ENCODE measurements at regions of chr20 and their contacts with region 1.

Region 1: GRCh38 chr20:35303735-35304491 is 11.7 kb upstream of the FAM83C start:
- DNase-seq: peak; percentile 70 to 79 (median 78)
- ATAC-seq: peak in 3 of 4 donors; percentile 52 to 57 (median 54)
- H3K4me3 ChIP-seq: no peak overlapping the region
- H3K27ac ChIP-seq: no peak overlapping the region
- H3K4me1 ChIP-seq: peaks cover 0 to 36% (median 18%) of the 10 kb centered on the region in 12 donors
- H3K27me3 ChIP-seq: no peaks in the 10 kb centered on the region
- CTCF ChIP-seq: peak; percentile 82 to 94 (median 88)
- POLR2A ChIP-seq: no peak

Region 2: DNA sequence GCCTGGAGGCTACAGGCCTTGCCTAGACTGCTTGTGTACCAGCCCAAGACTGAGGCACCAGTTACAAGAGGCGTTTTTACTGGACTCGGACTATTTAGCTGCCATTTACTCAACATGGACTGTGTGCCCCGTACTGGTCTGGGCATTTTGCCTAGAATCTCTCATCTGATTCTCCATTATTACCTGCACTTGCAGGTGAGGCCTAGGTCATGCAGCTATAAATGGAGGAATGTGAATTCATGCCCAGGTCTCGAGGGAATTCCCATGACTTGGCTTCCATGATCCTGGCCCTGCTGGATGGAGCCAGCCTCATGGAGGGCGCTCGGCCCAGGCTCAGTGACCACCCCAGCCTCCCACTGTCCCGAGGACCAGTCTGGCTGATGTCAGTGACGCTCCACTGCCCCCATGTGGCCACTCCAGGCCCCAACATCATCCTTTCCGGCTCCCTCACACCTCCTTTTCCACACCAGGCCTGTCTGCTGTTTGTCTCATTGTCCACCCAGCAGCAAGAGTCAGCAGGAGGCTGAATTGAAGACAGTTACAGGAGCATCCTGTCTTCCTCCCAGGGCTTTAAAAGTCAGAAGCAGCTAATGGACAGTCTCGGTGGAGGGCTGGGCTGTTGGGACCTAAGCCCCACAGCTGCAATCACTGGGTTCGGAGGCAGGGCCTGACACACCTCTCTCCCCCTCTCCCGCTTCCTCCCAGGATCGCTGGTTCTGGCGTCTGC is 34.7 kb before region 1 on chr20:
- intact Hi-C with region 1: no loop called
- DNase-seq: peak in 4 of 5 donors; percentile 43 to 66 (median 58)
- ATAC-seq: peak; percentile 34 to 72 (median 70)
- H3K4me3 ChIP-seq: no peak overlapping the region
- H3K27ac ChIP-seq: no peak overlapping the region
- H3K4me1 ChIP-seq: peaks cover 0 to 14% (median 0%) of the 10 kb centered on the region in 12 donors
- H3K27me3 ChIP-seq: no peaks in the 10 kb centered on the region
- CTCF ChIP-seq: peak; percentile 54 to 82 (median 68)
- POLR2A ChIP-seq: no peak

Region 3: GRCh38 chr20:35327074-35327976 is 23.4 kb after region 1 on chr20:
- intact Hi-C with region 1: loop called in 1 of 10 experiments (anchors 2 kb)
- DNase-seq: no peak
- ATAC-seq: peak in 2 of 4 donors; percentile 71 to 73
- H3K4me3 ChIP-seq: no peak overlapping the region
- H3K27ac ChIP-seq: no peak overlapping the region
- H3K4me1 ChIP-seq: peaks cover 0 to 20% (median 8%) of the 10 kb centered on the region in 12 donors
- H3K27me3 ChIP-seq: no peaks in the 10 kb centered on the region
- CTCF ChIP-seq: no peak
- POLR2A ChIP-seq: no peak

Region 4: GRCh38 chr20:35344354-35344837 is 40.5 kb after region 1 on chr20:
- intact Hi-C with region 1: loop called in 1 of 10 experiments (anchors 5 kb)
- DNase-seq: peak in 4 of 5 donors; percentile 23 to 72 (median 63)
- ATAC-seq: peak in 3 of 4 donors; percentile 62 to 84 (median 74)
- H3K4me3 ChIP-seq: peak overlapping the region in 1 of 12 donors; percentile 16
- H3K27ac ChIP-seq: peak overlapping the region in 2 of 12 donors; percentile 20 to 43
- H3K4me1 ChIP-seq: peaks cover 0 to 14% (median 6%) of the 10 kb centered on the region in 12 donors
- H3K27me3 ChIP-seq: no peaks in the 10 kb centered on the region
- CTCF ChIP-seq: no peak
- POLR2A ChIP-seq: no peak

Region 5: GRCh38 chr20:35432430-35432735 is 128.5 kb after region 1 on chr20:
- intact Hi-C with region 1: loop called in 2 of 10 experiments (anchors 2 to 5 kb)
- DNase-seq: no peak
- ATAC-seq: no peak
- H3K4me3 ChIP-seq: no peak overlapping the region
- H3K27ac ChIP-seq: no peak overlapping the region
- H3K4me1 ChIP-seq: no peaks in the 10 kb centered on the region
- H3K27me3 ChIP-seq: no peaks in the 10 kb centered on the region
- CTCF ChIP-seq: no peak
- POLR2A ChIP-seq: no peak

Region 6: GRCh38 chr20:35437491-35437998 is 133.6 kb after region 1 on chr20:
- intact Hi-C with region 1: loop called in 8 of 10 experiments (anchors 2 to 5 kb)
- DNase-seq: no peak
- ATAC-seq: no peak
- H3K4me3 ChIP-seq: peak overlapping the region in 3 of 12 donors; percentile 10 to 40 (median 14)
- H3K27ac ChIP-seq: peak overlapping the region in 3 of 12 donors; percentile 4 to 67 (median 8)
- H3K4me1 ChIP-seq: peaks cover 0 to 8% (median 0%) of the 10 kb centered on the region in 12 donors
- H3K27me3 ChIP-seq: no peaks in the 10 kb centered on the region
- CTCF ChIP-seq: no peak
- POLR2A ChIP-seq: no peak

Region 7: DNA sequence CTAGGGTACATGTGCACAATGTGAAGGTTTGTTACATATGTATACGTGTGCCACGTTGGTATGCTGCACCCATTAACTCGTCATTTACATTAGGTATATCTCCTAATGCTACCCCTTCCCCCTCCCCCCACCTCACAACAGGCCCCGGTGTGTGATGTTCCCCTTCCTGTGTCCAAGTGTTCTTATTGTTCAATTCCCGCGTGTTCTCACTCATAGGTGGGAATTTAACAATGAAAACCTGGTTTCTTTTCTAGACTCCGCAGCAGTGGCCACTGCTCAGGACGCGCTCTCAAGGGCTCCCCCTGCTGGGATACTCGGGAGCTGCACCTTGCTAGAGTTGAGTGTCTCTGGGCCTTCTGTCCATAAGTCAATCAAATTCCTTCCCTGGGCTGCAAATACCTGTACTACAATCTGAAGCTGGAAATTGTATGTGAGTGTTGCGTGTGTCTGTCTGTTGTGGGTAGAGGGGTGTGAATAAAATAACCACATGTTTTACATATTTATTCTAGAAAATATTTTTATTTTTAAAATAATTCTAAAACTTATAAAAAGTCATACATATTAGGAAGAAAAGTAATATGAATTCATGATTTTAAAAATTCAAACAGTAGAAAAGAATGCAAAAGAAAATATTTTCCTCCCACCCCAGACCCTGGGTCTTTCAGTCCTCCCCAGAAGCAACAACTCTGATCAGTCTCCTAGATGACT is 143.3 kb after region 1 on chr20:
- intact Hi-C with region 1: loop called in 6 of 10 experiments (anchors 1 to 5 kb)
- DNase-seq: peak; percentile 74 to 91 (median 81)
- ATAC-seq: peak; percentile 67 to 90 (median 88)
- H3K4me3 ChIP-seq: peak overlapping the region in 11 of 12 donors; percentile 10 to 51 (median 38)
- H3K27ac ChIP-seq: no peak overlapping the region
- H3K4me1 ChIP-seq: peaks cover 0 to 3% (median 0%) of the 10 kb centered on the region in 12 donors
- H3K27me3 ChIP-seq: no peaks in the 10 kb centered on the region
- CTCF ChIP-seq: peak; percentile 84 to 98 (median 93)
- POLR2A ChIP-seq: no peak

Measured in heart left ventricle (tissue), 16 donors.